ENCODE measurements at regions of chr10 and their contacts with region 1.

Region 1: GRCh38 chr10:110279407-110279986 is 25.2 kb downstream of the SMNDC1 start:
- DNase-seq: peak; percentile 72
- H3K4me3 ChIP-seq: peak overlapping the region in 1 of 4 donors; percentile 5
- H3K27ac ChIP-seq: peak overlapping the region in 2 of 4 donors; percentile 25 to 49
- H3K4me1 ChIP-seq: peaks cover 0 to 31% (median 16%) of the 10 kb centered on the region in 4 donors
- H3K27me3 ChIP-seq: no peaks in the 10 kb centered on the region
- CTCF ChIP-seq: peak; percentile 66 to 74 (median 69)
- EP300 ChIP-seq: no peak
- POLR2A ChIP-seq: no peak

Region 2: GRCh38 chr10:109883859-109884771 is 395.4 kb before region 1 on chr10:
- intact Hi-C with region 1: loop called (anchors 5 kb)
- DNase-seq: peak; percentile 89
- H3K4me3 ChIP-seq: peak overlapping the region in 2 of 4 donors; percentile 1 to 10
- H3K27ac ChIP-seq: peak overlapping the region; percentile 23 to 55 (median 52)
- H3K4me1 ChIP-seq: peaks cover 0 to 12% (median 8%) of the 10 kb centered on the region in 4 donors
- H3K27me3 ChIP-seq: no peaks in the 10 kb centered on the region
- CTCF ChIP-seq: peak; percentile 80 to 96 (median 93)
- EP300 ChIP-seq: no peak
- POLR2A ChIP-seq: no peak

Region 3: GRCh38 chr10:110210674-110211464 is 68.6 kb before region 1 on chr10:
- intact Hi-C with region 1: loop called (anchors 1 kb)
- DNase-seq: peak; percentile 99
- H3K4me3 ChIP-seq: peak overlapping the region; percentile 62 to 92 (median 76)
- H3K27ac ChIP-seq: peak overlapping the region; percentile 94 to 100 (median 98)
- H3K4me1 ChIP-seq: peaks cover 0 to 45% (median 35%) of the 10 kb centered on the region in 4 donors
- H3K27me3 ChIP-seq: no peaks in the 10 kb centered on the region
- CTCF ChIP-seq: no peak
- EP300 ChIP-seq: peak in 2 of 4 donors; percentile 39 to 75
- POLR2A ChIP-seq: peak; percentile 73 to 85

Measured in sigmoid colon (tissue), 7 donors.